Heart left ventricle (tissue), 16 donors: ENCODE measurements at regions of chr13 and their contacts with region 1.

Region 1: GRCh38 chr13:50529154-50529882 is 314.2 kb downstream of the DLEU7 start:
- DNase-seq: peak; percentile 87 to 95 (median 91)
- ATAC-seq: peak; percentile 86 to 96 (median 94)
- H3K4me3 ChIP-seq: peak overlapping the region in 10 of 12 donors; percentile 6 to 41 (median 26)
- H3K27ac ChIP-seq: peak overlapping the region; percentile 50 to 85 (median 76)
- H3K4me1 ChIP-seq: peaks cover 5 to 51% (median 28%) of the 10 kb centered on the region in 12 donors
- H3K27me3 ChIP-seq: no peaks in the 10 kb centered on the region
- CTCF ChIP-seq: no peak
- POLR2A ChIP-seq: no peak

Region 2: GRCh38 chr13:49976314-49977258 is 552.7 kb before region 1 on chr13:
- intact Hi-C with region 1: loop called in 8 of 10 experiments (anchors 2 to 10 kb)
- DNase-seq: peak; percentile 50 to 79 (median 66)
- ATAC-seq: peak in 3 of 4 donors; percentile 80 to 85 (median 81)
- H3K4me3 ChIP-seq: no peak overlapping the region
- H3K27ac ChIP-seq: no peak overlapping the region
- H3K4me1 ChIP-seq: peaks cover 0 to 5% (median 0%) of the 10 kb centered on the region in 12 donors
- H3K27me3 ChIP-seq: no peaks in the 10 kb centered on the region
- CTCF ChIP-seq: peak; percentile 59 to 92 (median 89)
- POLR2A ChIP-seq: no peak

Region 3: GRCh38 chr13:50123862-50124536 is 405.3 kb before region 1 on chr13:
- intact Hi-C with region 1: loop called in 3 of 10 experiments (anchors 2 to 10 kb)
- DNase-seq: peak; percentile 83 to 99 (median 85)
- ATAC-seq: peak; percentile 92 to 94 (median 94)
- H3K4me3 ChIP-seq: peak overlapping the region; percentile 71 to 98 (median 90)
- H3K27ac ChIP-seq: peak overlapping the region; percentile 99 to 100 (median 99)
- H3K4me1 ChIP-seq: peaks cover 0 to 69% (median 36%) of the 10 kb centered on the region in 12 donors
- H3K27me3 ChIP-seq: peaks cover 0 to 6% (median 0%) of the 10 kb centered on the region in 9 donors
- CTCF ChIP-seq: peak in 4 of 12 donors; percentile 10 to 41 (median 15)
- POLR2A ChIP-seq: peak in 1 of 2 donors; percentile 92

Region 4: DNA sequence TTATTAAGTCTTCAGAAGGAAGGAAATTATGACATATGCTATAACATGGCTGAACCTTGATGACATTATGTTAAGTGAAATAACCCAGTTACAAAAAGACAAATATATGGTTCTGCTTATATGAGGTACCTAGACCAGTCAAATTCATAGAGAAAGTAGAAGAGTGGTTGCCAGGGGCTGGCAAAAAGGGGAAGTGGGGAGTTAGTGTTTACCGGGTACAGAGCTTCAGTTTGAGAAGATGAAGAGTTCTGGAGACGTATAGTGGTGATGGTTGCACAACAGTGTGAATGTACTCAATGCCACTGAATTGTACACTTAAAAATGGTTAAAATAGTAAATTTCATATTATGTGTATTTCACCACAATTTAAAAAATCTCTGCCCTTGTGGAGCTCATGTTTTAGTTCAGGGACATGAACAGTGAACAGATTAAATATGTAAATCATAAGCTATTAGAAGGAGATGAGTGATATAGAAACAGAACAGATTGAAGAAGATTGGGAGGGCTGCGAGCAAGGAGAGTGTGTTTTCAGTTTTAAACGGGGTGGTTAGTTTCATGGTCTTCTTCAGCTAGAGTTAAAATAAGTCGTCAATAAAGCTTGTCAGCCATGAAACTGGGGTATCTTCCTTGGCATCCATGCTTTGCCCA is 158.9 kb before region 1 on chr13:
- intact Hi-C with region 1: loop called in 2 of 10 experiments (anchors 10 kb)
- DNase-seq: no peak
- ATAC-seq: no peak
- H3K4me3 ChIP-seq: no peak overlapping the region
- H3K27ac ChIP-seq: no peak overlapping the region
- H3K4me1 ChIP-seq: peaks cover 0 to 13% (median 0%) of the 10 kb centered on the region in 12 donors
- H3K27me3 ChIP-seq: no peaks in the 10 kb centered on the region
- CTCF ChIP-seq: no peak
- POLR2A ChIP-seq: no peak

Region 5: GRCh38 chr13:50401049-50401505 is 128.2 kb before region 1 on chr13:
- intact Hi-C with region 1: loop called in 2 of 10 experiments (anchors 10 kb)
- DNase-seq: no peak
- ATAC-seq: peak; percentile 44 to 68 (median 48)
- H3K4me3 ChIP-seq: no peak overlapping the region
- H3K27ac ChIP-seq: peak overlapping the region in 6 of 12 donors; percentile 58 to 76 (median 66)
- H3K4me1 ChIP-seq: peaks cover 0 to 45% (median 18%) of the 10 kb centered on the region in 12 donors
- H3K27me3 ChIP-seq: no peaks in the 10 kb centered on the region
- CTCF ChIP-seq: no peak
- POLR2A ChIP-seq: no peak

Region 6: DNA sequence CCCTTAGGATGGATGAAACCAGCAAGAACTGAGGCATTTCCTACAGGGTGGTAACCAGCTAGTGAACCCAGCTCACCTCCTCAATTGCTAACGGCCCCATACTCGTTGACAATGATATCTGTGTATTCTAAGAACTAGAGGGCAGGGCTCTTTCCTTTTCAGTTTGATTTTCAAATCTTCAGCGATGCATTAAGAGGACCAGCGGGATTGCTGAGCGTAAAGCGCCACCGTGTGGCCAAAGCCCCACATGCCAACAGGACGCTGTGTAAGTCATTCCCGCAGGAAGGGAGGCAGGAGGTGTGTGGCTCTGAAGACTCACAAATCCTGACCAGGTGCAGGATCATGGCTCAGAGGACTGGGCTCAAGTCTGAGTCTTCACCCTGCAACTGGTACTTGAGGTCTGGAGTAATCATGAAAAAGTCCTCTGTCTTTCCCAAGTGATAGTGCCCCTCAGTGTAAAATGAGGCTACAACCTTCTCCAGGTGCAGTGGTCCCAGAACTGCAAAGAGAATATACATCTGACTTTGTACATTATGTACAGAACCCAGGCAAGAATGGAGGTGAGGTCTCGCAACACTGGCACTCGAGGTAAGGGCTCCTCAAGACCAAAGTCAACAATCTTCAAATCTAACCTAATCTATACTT is 540.8 kb after region 1 on chr13:
- intact Hi-C with region 1: loop called in 1 of 10 experiments (anchors 10 kb)
- DNase-seq: peak; percentile 66 to 87 (median 77)
- ATAC-seq: peak; percentile 74 to 87 (median 82)
- H3K4me3 ChIP-seq: no peak overlapping the region
- H3K27ac ChIP-seq: no peak overlapping the region
- H3K4me1 ChIP-seq: peaks cover 0 to 30% (median 8%) of the 10 kb centered on the region in 12 donors
- H3K27me3 ChIP-seq: peaks cover 0 to 1% (median 0%) of the 10 kb centered on the region in 9 donors
- CTCF ChIP-seq: peak; percentile 84 to 97 (median 93)
- POLR2A ChIP-seq: no peak